Esophagus muscularis mucosa (tissue), 4 donors: ENCODE measurements at regions of chr13 and their contacts with region 1.

Region 1: DNA sequence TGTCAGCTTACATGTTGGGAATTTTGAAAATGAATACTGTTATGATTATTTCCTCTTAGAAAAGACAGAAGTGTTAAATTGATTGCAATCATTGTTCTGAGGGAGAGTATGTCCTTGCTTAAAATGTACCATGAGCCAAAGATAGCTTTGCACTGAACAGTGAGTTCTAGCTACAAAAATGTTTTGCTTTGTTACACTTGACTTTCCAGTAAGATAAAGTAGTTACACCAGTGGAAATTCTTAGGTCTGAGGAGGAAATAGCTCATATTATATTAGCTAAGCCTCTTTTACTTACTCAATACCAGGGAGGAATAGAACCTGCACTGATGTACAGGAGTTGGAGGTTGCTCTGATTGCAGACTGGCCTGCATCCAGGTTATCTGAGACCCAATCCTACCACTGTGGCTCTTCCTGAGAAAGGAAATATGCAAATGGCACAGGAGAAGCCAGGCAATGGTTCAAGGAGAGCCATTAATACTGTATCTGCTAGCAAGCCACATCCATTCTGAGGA is 53.0 kb upstream of the FBXL3 start:
- DNase-seq: no peak
- H3K4me3 ChIP-seq: no peak overlapping the region
- H3K27ac ChIP-seq: no peak overlapping the region
- H3K4me1 ChIP-seq: no peaks in the 10 kb centered on the region
- H3K27me3 ChIP-seq: no peaks in the 10 kb centered on the region
- CTCF ChIP-seq: no peak
- EP300 ChIP-seq: no peak
- POLR2A ChIP-seq: no peak

Region 2: GRCh38 chr13:77176350-77176749 is 96.4 kb after region 1 on chr13:
- intact Hi-C with region 1: loop called (anchors 10 kb)
- DNase-seq: no peak
- H3K4me3 ChIP-seq: no peak overlapping the region
- H3K27ac ChIP-seq: no peak overlapping the region
- H3K4me1 ChIP-seq: no peaks in the 10 kb centered on the region
- H3K27me3 ChIP-seq: no peaks in the 10 kb centered on the region
- CTCF ChIP-seq: no peak
- EP300 ChIP-seq: no peak
- POLR2A ChIP-seq: no peak